Activated T-helper 1 cell treated with anti-CD3 and anti-CD28 coated beads, Interleukin-12 subunit alpha, Interleukin-12 subunit beta, Interleukin-2, Interleukin-4 antibody, amounts not matched to agents 30 ng/mL and 10 ng/mL and 1 ng/mL, durations not matched to agents 14 hours and 24 hours and 36 hours (primary cell): ENCODE measurements at regions of chr11 and their contacts with region 1.

Region 1: GRCh38 chr11:117817368-117818040 is 7.0 kb downstream of the FXYD2 start:
- DNase-seq: peak; percentile 83
- H3K4me3 Mint-ChIP-seq: peak overlapping the region; percentile 70
- H3K27ac Mint-ChIP-seq: peak overlapping the region; percentile 98
- H3K4me1 Mint-ChIP-seq: peaks cover 79% of the 10 kb centered on the region
- H3K27me3 Mint-ChIP-seq: no peaks in the 10 kb centered on the region

Region 2: DNA sequence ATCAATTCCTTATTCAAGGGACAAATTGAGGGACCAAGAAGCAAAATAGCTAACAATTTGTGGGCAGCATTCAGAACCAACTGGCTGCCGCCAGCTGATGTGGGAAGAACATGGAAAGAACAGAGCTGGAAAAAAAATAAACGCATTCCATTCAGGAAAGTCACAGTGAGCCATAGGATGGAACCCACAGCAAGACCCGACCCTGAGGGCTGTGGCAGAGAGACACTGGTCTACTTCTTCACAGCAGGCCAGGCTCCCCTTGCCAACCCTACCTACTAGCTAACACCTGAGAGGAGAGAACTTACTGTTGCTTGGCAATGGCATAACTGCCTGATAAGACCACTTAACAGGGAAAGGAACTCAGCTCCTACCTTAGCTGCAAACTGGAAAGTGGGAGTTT is 856.6 kb before region 1 on chr11:
- intact Hi-C with region 1: no loop called
- DNase-seq: no peak
- H3K4me3 Mint-ChIP-seq: no peak overlapping the region
- H3K27ac Mint-ChIP-seq: no peak overlapping the region
- H3K4me1 Mint-ChIP-seq: peaks cover 21% of the 10 kb centered on the region
- H3K27me3 Mint-ChIP-seq: no peaks in the 10 kb centered on the region

Region 3: DNA sequence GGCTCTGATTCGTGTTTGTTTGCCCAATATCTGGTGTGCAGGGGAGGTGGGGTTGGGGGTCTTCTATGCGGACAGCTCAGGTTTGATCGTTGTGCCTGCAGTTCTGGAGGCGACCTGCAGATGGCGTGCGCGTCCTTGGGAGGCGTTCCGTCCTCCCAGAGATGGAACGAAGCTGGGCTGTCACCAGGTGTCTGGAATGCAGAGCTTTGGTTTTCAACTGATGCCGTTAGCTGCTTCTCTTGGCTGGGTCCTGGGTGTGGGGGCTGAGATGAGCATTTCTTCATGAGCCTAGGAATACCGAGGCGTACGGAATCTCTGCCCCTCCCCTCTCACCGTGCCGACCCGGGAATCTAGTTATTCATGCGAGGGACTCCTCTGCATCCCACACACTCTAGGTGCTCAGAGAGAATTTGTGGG is 391.2 kb before region 1 on chr11:
- intact Hi-C with region 1: loop called (anchors 1 kb)
- DNase-seq: peak; percentile 44
- H3K4me3 Mint-ChIP-seq: no peak overlapping the region
- H3K27ac Mint-ChIP-seq: no peak overlapping the region
- H3K4me1 Mint-ChIP-seq: no peaks in the 10 kb centered on the region
- H3K27me3 Mint-ChIP-seq: peaks cover 3% of the 10 kb centered on the region

Region 4: GRCh38 chr11:117828611-117829368 is 11.3 kb after region 1 on chr11:
- intact Hi-C with region 1: loop called (anchors 1 kb)
- DNase-seq: peak; percentile 79
- H3K4me3 Mint-ChIP-seq: peak overlapping the region; percentile 37
- H3K27ac Mint-ChIP-seq: peak overlapping the region; percentile 86
- H3K4me1 Mint-ChIP-seq: peaks cover 73% of the 10 kb centered on the region
- H3K27me3 Mint-ChIP-seq: no peaks in the 10 kb centered on the region

Region 5: GRCh38 chr11:118002541-118003423 is 185.3 kb after region 1 on chr11:
- intact Hi-C with region 1: loop called (anchors 1 kb)
- DNase-seq: peak; percentile 50
- H3K4me3 Mint-ChIP-seq: peak overlapping the region; percentile 61
- H3K27ac Mint-ChIP-seq: peak overlapping the region; percentile 98
- H3K4me1 Mint-ChIP-seq: peaks cover 92% of the 10 kb centered on the region
- H3K27me3 Mint-ChIP-seq: no peaks in the 10 kb centered on the region